ENCODE measurements at regions of chr9 and their contacts with region 1.

Region 1: DNA sequence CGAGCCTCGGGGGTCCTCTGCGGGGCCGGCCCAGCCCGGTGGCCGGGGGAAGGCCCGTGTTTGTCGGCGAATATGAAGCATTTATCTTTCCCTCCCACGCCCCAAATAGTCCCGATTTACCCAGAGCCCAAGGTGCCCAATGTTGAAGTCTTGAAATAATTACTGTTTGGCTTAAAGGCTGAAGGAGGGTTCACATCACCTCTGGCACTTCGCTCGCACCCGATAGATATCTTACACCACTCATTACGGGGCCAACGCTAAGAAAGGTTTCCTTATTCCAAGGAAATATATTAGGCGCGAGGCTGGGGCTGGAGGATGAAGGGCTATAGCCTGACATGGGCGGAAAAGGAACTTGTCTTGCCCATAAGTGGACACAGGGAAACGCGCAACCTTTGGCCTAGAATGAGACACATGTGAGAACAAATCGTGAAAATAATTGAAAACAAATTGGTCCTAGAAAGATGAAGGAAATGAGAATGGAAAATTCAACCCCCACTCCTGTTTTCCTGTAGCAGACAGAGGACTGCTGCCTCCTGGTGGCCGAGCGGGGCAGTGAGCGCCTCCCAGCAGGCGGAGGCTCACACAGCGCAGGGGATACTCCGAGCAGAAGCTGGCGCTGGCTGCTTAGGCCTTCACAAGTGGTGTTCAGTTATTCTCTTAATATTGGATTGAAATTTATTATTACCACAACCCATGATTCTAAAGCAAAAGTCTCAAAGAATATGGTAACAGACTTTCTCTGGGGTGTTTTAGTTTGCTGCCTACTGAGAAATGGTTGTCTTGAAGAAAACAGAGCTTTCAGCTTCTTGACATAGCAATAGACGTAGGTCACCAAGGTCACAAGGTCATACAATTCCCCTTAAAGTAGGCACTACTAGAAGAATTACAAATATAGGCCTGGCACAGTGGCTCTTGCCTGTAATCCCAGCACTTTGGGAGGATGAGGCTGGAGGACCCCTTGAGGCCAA is 7.9 kb downstream of the CCL21 start:
- DNase-seq: peak; percentile 86
- H3K4me3 Mint-ChIP-seq: peak overlapping the region; percentile 63
- H3K27ac Mint-ChIP-seq: no peak overlapping the region
- H3K4me1 Mint-ChIP-seq: peaks cover 14% of the 10 kb centered on the region
- H3K27me3 Mint-ChIP-seq: peaks cover 37% of the 10 kb centered on the region

Region 2: DNA sequence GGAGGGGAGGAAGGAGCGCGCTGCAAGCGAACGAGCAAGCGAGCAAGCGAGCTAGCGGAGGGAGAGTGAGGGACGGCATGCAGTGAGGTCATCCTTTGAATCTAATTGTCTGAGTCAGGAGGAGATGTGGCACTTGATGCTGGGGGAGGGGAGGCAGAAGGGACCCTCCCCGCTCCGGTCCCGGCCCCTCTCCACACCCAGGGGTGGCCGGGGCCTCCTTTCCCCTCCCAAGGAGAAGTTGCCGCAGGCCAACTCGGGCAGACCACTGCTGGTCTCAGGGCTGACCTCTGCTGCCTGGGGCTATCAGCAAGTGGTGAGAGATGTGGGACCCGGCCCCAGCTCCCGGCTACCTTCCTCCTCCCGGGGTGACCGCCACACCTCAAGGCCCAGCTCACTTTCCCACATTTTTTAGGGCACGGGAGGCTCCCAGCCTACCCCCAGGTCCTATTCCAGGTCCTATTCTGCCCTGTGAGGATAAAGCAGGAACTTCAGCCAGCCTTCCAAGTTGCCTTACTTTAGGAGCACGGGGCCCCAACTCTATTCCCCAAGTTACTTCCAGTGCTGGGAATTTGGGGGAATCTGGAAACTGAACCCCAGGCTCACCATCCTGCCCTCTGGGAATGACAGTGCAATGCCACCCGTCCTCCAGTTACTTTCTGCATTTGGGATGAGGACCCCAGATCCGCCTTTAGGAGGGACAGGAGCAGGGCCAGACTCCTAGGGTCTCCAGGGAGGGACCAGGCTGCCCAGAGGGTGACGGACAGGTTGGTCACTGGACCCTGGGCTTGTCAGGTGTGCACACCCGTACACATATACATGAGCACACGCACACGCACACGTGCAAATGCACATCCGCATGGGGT is 123.6 kb before region 1 on chr9:
- CTCF ChIA-PET with region 1: no interaction called
- DNase-seq: no peak
- H3K4me3 Mint-ChIP-seq: no peak overlapping the region
- H3K27ac Mint-ChIP-seq: no peak overlapping the region
- H3K4me1 Mint-ChIP-seq: peaks cover 4% of the 10 kb centered on the region
- H3K27me3 Mint-ChIP-seq: peaks cover 88% of the 10 kb centered on the region

Region 3: GRCh38 chr9:34665381-34666250 is 36.4 kb before region 1 on chr9:
- CTCF ChIA-PET with region 1: interaction called, 13 read pairs
- DNase-seq: peak; percentile 92
- H3K4me3 Mint-ChIP-seq: peak overlapping the region; percentile 85
- H3K27ac Mint-ChIP-seq: peak overlapping the region; percentile 93
- H3K4me1 Mint-ChIP-seq: peaks cover 49% of the 10 kb centered on the region
- H3K27me3 Mint-ChIP-seq: peaks cover 15% of the 10 kb centered on the region

Region 4: GRCh38 chr9:34686231-34686630 is 15.8 kb before region 1 on chr9:
- CTCF ChIA-PET with region 1: interaction called, 27 read pairs
- DNase-seq: no peak
- H3K4me3 Mint-ChIP-seq: no peak overlapping the region
- H3K27ac Mint-ChIP-seq: no peak overlapping the region
- H3K4me1 Mint-ChIP-seq: no peaks in the 10 kb centered on the region
- H3K27me3 Mint-ChIP-seq: peaks cover 21% of the 10 kb centered on the region

Region 5: GRCh38 chr9:34714007-34714406 is 12.0 kb after region 1 on chr9:
- CTCF ChIA-PET with region 1: interaction called, 11 read pairs
- DNase-seq: no peak
- H3K4me3 Mint-ChIP-seq: no peak overlapping the region
- H3K27ac Mint-ChIP-seq: no peak overlapping the region
- H3K4me1 Mint-ChIP-seq: no peaks in the 10 kb centered on the region
- H3K27me3 Mint-ChIP-seq: peaks cover 20% of the 10 kb centered on the region

Measured in activated naive CD4-positive, alpha-beta T cell treated with anti-CD3 and anti-CD28 coated beads, Interleukin-2, amount 10 ng/mL, durations not matched to agents 7 days and 5 days (primary cell).